B cell (primary cell): ENCODE measurements at regions of chr6 and their contacts with region 1.

Region 1: DNA sequence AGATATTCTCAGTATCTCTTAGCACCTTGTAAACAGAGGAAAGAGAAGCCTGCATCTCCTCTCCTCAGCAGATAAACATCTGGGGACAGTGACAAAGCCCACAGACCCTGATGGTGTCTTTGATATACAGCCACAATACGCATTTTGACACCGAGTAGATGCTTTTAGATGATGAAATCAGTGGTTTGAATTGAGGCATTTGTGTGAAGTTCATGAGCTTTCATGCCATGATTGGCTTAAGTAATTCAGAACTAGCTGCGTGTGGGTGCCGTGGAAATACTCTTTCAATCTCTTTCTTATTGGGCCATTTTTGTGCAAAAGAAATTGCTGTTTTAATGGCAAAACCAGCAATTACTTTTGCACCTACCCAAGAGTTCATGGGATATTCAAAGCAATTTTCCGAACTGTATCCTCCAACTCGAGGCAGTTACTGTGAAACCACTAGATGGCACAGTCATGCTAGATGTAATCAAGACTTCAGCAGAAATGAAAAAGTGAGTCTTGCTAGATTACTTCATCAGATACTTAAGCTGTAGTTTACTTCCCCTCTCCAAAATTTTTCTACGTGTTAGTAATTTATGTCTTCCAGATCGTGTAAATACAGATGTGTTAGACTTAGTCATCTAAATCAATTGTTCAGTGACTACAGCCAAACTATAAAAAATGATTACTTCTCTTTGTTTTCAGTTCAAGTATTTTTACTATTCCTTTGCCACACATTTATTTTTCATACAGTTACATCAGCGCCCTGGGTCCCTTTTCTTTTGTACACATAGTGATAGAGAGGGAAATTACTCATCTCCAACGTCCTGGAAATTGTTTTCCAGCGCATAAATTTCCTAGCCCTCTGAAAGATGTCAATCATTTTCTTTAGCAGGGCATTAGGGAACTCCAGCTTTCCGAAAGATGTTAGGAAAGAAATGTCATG is 49.4 kb downstream of the IYD start:
- DNase-seq: peak; percentile 84
- ATAC-seq: peak; percentile 82
- H3K4me3 ChIP-seq: peak overlapping the region; percentile 45 to 75 (median 63)
- H3K4me3 Mint-ChIP-seq: peak overlapping the region; percentile 91
- H3K27ac ChIP-seq: peak overlapping the region in 1 of 2 donors; percentile 73
- H3K27ac Mint-ChIP-seq: peak overlapping the region; percentile 22
- H3K4me1 ChIP-seq: peaks cover 0 to 5% of the 10 kb centered on the region in 2 donors
- H3K4me1 Mint-ChIP-seq: peaks cover 14% of the 10 kb centered on the region
- H3K27me3 ChIP-seq: peaks cover 0 to 4% (median 2%) of the 10 kb centered on the region in 4 experiments
- H3K27me3 Mint-ChIP-seq: peaks cover 23% of the 10 kb centered on the region
- CTCF ChIP-seq: peak; percentile 79

Region 2: GRCh38 chr6:150622941-150623874 is 205.0 kb after region 1 on chr6:
- CTCF ChIA-PET with region 1: interaction called, 17 read pairs
- POLR2A ChIA-PET with region 1: no interaction called
- intact Hi-C with region 1: no loop called
- DNase-seq: peak; percentile 95
- ATAC-seq: peak; percentile 85
- H3K4me3 ChIP-seq: peak overlapping the region in 2 of 5 experiments; percentile 18 to 37
- H3K4me3 Mint-ChIP-seq: peak overlapping the region; percentile 9
- H3K27ac ChIP-seq: peak overlapping the region; percentile 96
- H3K27ac Mint-ChIP-seq: peak overlapping the region; percentile 94
- H3K4me1 ChIP-seq: peaks cover 93 to 94% of the 10 kb centered on the region in 2 donors
- H3K4me1 Mint-ChIP-seq: peaks cover 90% of the 10 kb centered on the region
- H3K27me3 ChIP-seq: no peaks in the 10 kb centered on the region
- H3K27me3 Mint-ChIP-seq: no peaks in the 10 kb centered on the region
- CTCF ChIP-seq: no peak

Region 3: DNA sequence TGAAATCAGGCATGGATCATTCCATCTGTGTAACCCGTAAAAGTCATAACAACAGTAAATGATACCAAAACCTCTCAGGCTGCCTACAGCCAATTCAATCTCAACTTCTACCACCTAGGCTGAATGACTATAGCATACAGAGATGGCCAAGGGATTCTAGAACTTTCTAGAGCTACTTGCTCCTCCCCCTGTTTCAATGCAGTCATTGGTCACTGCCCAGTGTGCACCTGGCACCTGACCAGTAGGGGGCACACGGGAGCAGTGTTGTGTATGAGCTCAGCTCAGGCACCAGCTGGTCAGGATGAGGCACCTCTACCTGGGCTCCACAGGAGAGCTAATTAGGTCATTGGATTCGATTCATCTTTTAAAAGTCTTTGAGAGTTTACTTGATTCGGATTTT is 267.7 kb after region 1 on chr6:
- CTCF ChIA-PET with region 1: interaction called, 17 read pairs
- POLR2A ChIA-PET with region 1: no interaction called
- intact Hi-C with region 1: loop called (anchors 2 kb)
- DNase-seq: peak; percentile 73
- ATAC-seq: peak; percentile 44
- H3K4me3 ChIP-seq: no peak overlapping the region
- H3K4me3 Mint-ChIP-seq: no peak overlapping the region
- H3K27ac ChIP-seq: peak overlapping the region; percentile 72 to 96
- H3K27ac Mint-ChIP-seq: peak overlapping the region; percentile 46
- H3K4me1 ChIP-seq: peaks cover 89 to 98% of the 10 kb centered on the region in 2 donors
- H3K4me1 Mint-ChIP-seq: peaks cover 93% of the 10 kb centered on the region
- H3K27me3 ChIP-seq: no peaks in the 10 kb centered on the region
- H3K27me3 Mint-ChIP-seq: no peaks in the 10 kb centered on the region
- CTCF ChIP-seq: peak; percentile 75

Region 4: GRCh38 chr6:150765067-150765764 is 347.1 kb after region 1 on chr6:
- CTCF ChIA-PET with region 1: interaction called, 13 read pairs
- POLR2A ChIA-PET with region 1: no interaction called
- intact Hi-C with region 1: no loop called
- DNase-seq: peak; percentile 80
- ATAC-seq: peak; percentile 87
- H3K4me3 ChIP-seq: peak overlapping the region in 2 of 5 experiments; percentile 1 to 33
- H3K4me3 Mint-ChIP-seq: peak overlapping the region; percentile 70
- H3K27ac ChIP-seq: peak overlapping the region; percentile 54 to 68
- H3K27ac Mint-ChIP-seq: no peak overlapping the region
- H3K4me1 ChIP-seq: peaks cover 44 to 48% of the 10 kb centered on the region in 2 donors
- H3K4me1 Mint-ChIP-seq: peaks cover 59% of the 10 kb centered on the region
- H3K27me3 ChIP-seq: no peaks in the 10 kb centered on the region
- H3K27me3 Mint-ChIP-seq: no peaks in the 10 kb centered on the region
- CTCF ChIP-seq: no peak

Region 5: GRCh38 chr6:150813319-150813992 is 395.3 kb after region 1 on chr6:
- CTCF ChIA-PET with region 1: interaction called, 378 read pairs
- POLR2A ChIA-PET with region 1: interaction called, 7 read pairs
- intact Hi-C with region 1: loop called (anchors 1 kb)
- DNase-seq: peak; percentile 65
- ATAC-seq: peak; percentile 55
- H3K4me3 ChIP-seq: no peak overlapping the region
- H3K4me3 Mint-ChIP-seq: peak overlapping the region; percentile 73
- H3K27ac ChIP-seq: peak overlapping the region; percentile 45 to 85
- H3K27ac Mint-ChIP-seq: peak overlapping the region; percentile 95
- H3K4me1 ChIP-seq: peaks cover 0 to 9% of the 10 kb centered on the region in 2 donors
- H3K4me1 Mint-ChIP-seq: peaks cover 34% of the 10 kb centered on the region
- H3K27me3 ChIP-seq: no peaks in the 10 kb centered on the region
- H3K27me3 Mint-ChIP-seq: no peaks in the 10 kb centered on the region
- CTCF ChIP-seq: no peak

Region 6: DNA sequence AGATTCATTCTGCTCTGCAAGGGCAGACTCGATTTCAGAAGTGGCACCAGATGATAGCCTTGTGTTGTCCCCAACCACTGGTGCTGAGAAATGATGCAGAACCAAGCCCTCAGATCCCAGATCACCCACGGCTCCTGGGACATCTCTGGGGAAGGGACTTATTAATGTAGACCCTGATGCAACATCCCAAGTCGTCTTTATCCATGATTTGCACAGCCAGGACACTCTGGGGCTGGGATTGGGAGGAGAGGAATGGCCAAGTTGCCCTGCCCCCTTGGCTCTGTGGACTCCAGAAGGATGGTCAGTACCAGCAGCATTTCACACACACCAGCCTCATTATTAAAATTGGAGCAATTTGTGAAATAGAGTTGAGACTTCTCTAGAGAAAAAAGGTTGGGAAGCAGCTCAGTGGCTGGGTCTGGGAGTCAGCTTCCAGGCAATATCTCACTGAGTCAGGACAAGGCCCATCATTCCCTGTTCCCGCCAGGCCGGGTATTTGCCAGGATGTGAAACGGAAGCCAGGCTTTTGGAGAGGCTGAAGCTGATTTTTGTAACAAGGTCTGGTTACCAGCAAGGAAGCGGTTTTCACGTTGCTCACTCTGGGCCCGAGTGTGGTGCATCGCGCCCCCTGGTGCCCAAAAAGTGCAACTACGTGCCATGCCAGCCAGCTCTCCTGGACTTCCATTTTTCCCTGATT is 905.8 kb after region 1 on chr6:
- CTCF ChIA-PET with region 1: interaction called, 13 read pairs
- POLR2A ChIA-PET with region 1: no interaction called
- intact Hi-C with region 1: no loop called
- DNase-seq: peak; percentile 77
- ATAC-seq: peak; percentile 80
- H3K4me3 ChIP-seq: no peak overlapping the region
- H3K4me3 Mint-ChIP-seq: peak overlapping the region; percentile 80
- H3K27ac ChIP-seq: no peak overlapping the region
- H3K27ac Mint-ChIP-seq: peak overlapping the region; percentile 21
- H3K4me1 ChIP-seq: peaks cover 19 to 20% of the 10 kb centered on the region in 2 donors
- H3K4me1 Mint-ChIP-seq: peaks cover 26% of the 10 kb centered on the region
- H3K27me3 ChIP-seq: peaks cover 0 to 18% (median 1%) of the 10 kb centered on the region in 4 experiments
- H3K27me3 Mint-ChIP-seq: peaks cover 62% of the 10 kb centered on the region
- CTCF ChIP-seq: peak; percentile 98